CD8-positive, alpha-beta T cell (primary cell): ENCODE measurements at regions of chr10 and their contacts with region 1.

Region 1: DNA sequence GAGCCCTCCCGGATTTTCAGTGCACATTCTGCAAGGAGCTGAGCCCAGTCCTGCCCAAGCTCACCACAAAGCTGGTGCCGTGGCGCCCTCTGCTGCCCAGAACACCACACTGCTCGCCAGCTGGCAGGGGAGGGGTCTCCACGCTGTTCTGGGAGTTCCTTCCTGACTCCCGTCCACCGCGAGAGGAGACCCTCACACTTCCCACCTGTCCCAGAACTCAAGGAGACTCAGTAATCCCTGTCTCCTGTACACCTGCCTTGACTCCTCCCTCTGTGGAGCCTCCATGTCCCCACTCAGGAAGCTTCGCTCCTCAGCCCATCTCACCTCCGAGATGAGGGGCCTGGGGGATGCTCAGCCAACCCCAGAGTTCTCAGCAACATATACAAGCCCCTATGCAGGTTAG is 11.3 kb downstream of the C10orf105 start:
- DNase-seq: peak; percentile 38 to 83 (median 68)
- ATAC-seq: peak; percentile 66
- H3K4me3 ChIP-seq: no peak overlapping the region
- H3K4me3 Mint-ChIP-seq: no peak overlapping the region
- H3K27ac ChIP-seq: no peak overlapping the region
- H3K27ac Mint-ChIP-seq: no peak overlapping the region
- H3K4me1 ChIP-seq: peaks cover 31% of the 10 kb centered on the region
- H3K4me1 Mint-ChIP-seq: peaks cover 47% of the 10 kb centered on the region
- H3K27me3 ChIP-seq: no peaks in the 10 kb centered on the region
- H3K27me3 Mint-ChIP-seq: no peaks in the 10 kb centered on the region
- CTCF ChIP-seq: peak; percentile 79

Region 2: GRCh38 chr10:71319042-71319799 is 389.1 kb before region 1 on chr10 and contains the start of gene SLC29A3:
- CTCF ChIA-PET with region 1: interaction called, 30 read pairs
- POLR2A ChIA-PET with region 1: interaction called, 4 read pairs
- intact Hi-C with region 1: loop called (anchors 1 kb)
- DNase-seq: peak; percentile 69 to 92 (median 80)
- ATAC-seq: peak; percentile 87
- H3K4me3 ChIP-seq: peak within 1 kb of the TSS; percentile 83 to 91
- H3K4me3 Mint-ChIP-seq: peak within 1 kb of the TSS; percentile 92
- H3K27ac ChIP-seq: peak within 1 kb of the TSS; percentile 58 to 61
- H3K27ac Mint-ChIP-seq: peak within 1 kb of the TSS; percentile 80
- H3K4me1 ChIP-seq: peaks cover 18% of the 10 kb centered on the region
- H3K4me1 Mint-ChIP-seq: peaks cover 45% of the 10 kb centered on the region
- H3K27me3 ChIP-seq: no peaks in the 10 kb centered on the region
- H3K27me3 Mint-ChIP-seq: no peaks in the 10 kb centered on the region
- CTCF ChIP-seq: peak; percentile 38
- total RNA-seq, gene SLC29A3: 1.4 to 2.9 TPM

Region 3: GRCh38 chr10:71665456-71665855 is 42.8 kb before region 1 on chr10:
- CTCF ChIA-PET with region 1: interaction called, 10 read pairs
- POLR2A ChIA-PET with region 1: interaction called, 3 read pairs
- intact Hi-C with region 1: loop called (anchors 1 kb)
- DNase-seq: no peak
- ATAC-seq: no peak
- H3K4me3 ChIP-seq: no peak overlapping the region
- H3K4me3 Mint-ChIP-seq: no peak overlapping the region
- H3K27ac ChIP-seq: no peak overlapping the region
- H3K27ac Mint-ChIP-seq: no peak overlapping the region
- H3K4me1 ChIP-seq: peaks cover 18% of the 10 kb centered on the region
- H3K4me1 Mint-ChIP-seq: peaks cover 21% of the 10 kb centered on the region
- H3K27me3 ChIP-seq: no peaks in the 10 kb centered on the region
- H3K27me3 Mint-ChIP-seq: no peaks in the 10 kb centered on the region
- CTCF ChIP-seq: no peak

Region 4: GRCh38 chr10:71727738-71728737 is 19.7 kb after region 1 on chr10:
- CTCF ChIA-PET with region 1: interaction called, 51 read pairs
- POLR2A ChIA-PET with region 1: interaction called, 19 read pairs
- intact Hi-C with region 1: loop called in 1 of 2 experiments (anchors 1 kb)
- DNase-seq: peak; percentile 58 to 93 (median 78)
- ATAC-seq: peak; percentile 60
- H3K4me3 ChIP-seq: peak overlapping the region; percentile 16 to 18
- H3K4me3 Mint-ChIP-seq: peak overlapping the region; percentile 58
- H3K27ac ChIP-seq: peak overlapping the region; percentile 75 to 86
- H3K27ac Mint-ChIP-seq: peak overlapping the region; percentile 98
- H3K4me1 ChIP-seq: peaks cover 93% of the 10 kb centered on the region
- H3K4me1 Mint-ChIP-seq: peaks cover 86% of the 10 kb centered on the region
- H3K27me3 ChIP-seq: no peaks in the 10 kb centered on the region
- H3K27me3 Mint-ChIP-seq: no peaks in the 10 kb centered on the region
- CTCF ChIP-seq: no peak

Region 5: GRCh38 chr10:71766702-71767419 is 58.6 kb after region 1 on chr10:
- CTCF ChIA-PET with region 1: interaction called, 242 read pairs
- POLR2A ChIA-PET with region 1: interaction called, 15 read pairs
- intact Hi-C with region 1: loop called in 1 of 2 experiments (anchors 5 kb)
- DNase-seq: peak in 3 of 9 experiments; percentile 55 to 64 (median 57)
- ATAC-seq: no peak
- H3K4me3 ChIP-seq: peak overlapping the region in 1 of 2 experiments; percentile 13
- H3K4me3 Mint-ChIP-seq: peak overlapping the region; percentile 70
- H3K27ac ChIP-seq: peak overlapping the region; percentile 17 to 89
- H3K27ac Mint-ChIP-seq: peak overlapping the region; percentile 96
- H3K4me1 ChIP-seq: peaks cover 92% of the 10 kb centered on the region
- H3K4me1 Mint-ChIP-seq: peaks cover 93% of the 10 kb centered on the region
- H3K27me3 ChIP-seq: no peaks in the 10 kb centered on the region
- H3K27me3 Mint-ChIP-seq: no peaks in the 10 kb centered on the region
- CTCF ChIP-seq: no peak

Region 6: GRCh38 chr10:71812016-71812912 is 104.0 kb after region 1 on chr10:
- CTCF ChIA-PET with region 1: interaction called, 40 read pairs
- POLR2A ChIA-PET with region 1: no interaction called
- intact Hi-C with region 1: loop called (anchors 1 to 2 kb)
- DNase-seq: peak; percentile 63 to 91 (median 79)
- ATAC-seq: peak; percentile 91
- H3K4me3 ChIP-seq: no peak overlapping the region
- H3K4me3 Mint-ChIP-seq: no peak overlapping the region
- H3K27ac ChIP-seq: no peak overlapping the region
- H3K27ac Mint-ChIP-seq: no peak overlapping the region
- H3K4me1 ChIP-seq: peaks cover 4% of the 10 kb centered on the region
- H3K4me1 Mint-ChIP-seq: peaks cover 2% of the 10 kb centered on the region
- H3K27me3 ChIP-seq: no peaks in the 10 kb centered on the region
- H3K27me3 Mint-ChIP-seq: no peaks in the 10 kb centered on the region
- CTCF ChIP-seq: peak; percentile 79

Region 7: GRCh38 chr10:71963756-71964668 is 255.7 kb after region 1 on chr10 and contains the start of gene CHST3:
- CTCF ChIA-PET with region 1: no interaction called
- POLR2A ChIA-PET with region 1: no interaction called
- intact Hi-C with region 1: no loop called
- DNase-seq: peak in 1 of 9 experiments; percentile 10
- ATAC-seq: no peak
- H3K4me3 ChIP-seq: peak within 1 kb of the TSS in 1 of 2 experiments; percentile 48
- H3K4me3 Mint-ChIP-seq: peak within 1 kb of the TSS; percentile 74
- H3K27ac ChIP-seq: no peak within 1 kb of the TSS
- H3K27ac Mint-ChIP-seq: no peak within 1 kb of the TSS
- H3K4me1 ChIP-seq: peaks cover 9% of the 10 kb centered on the region
- H3K4me1 Mint-ChIP-seq: peaks cover 10% of the 10 kb centered on the region
- H3K27me3 ChIP-seq: peaks cover 8 to 14% of the 10 kb centered on the region in 2 experiments
- H3K27me3 Mint-ChIP-seq: peaks cover 45% of the 10 kb centered on the region
- CTCF ChIP-seq: no peak
- total RNA-seq, gene CHST3: not detected

Region 8: DNA sequence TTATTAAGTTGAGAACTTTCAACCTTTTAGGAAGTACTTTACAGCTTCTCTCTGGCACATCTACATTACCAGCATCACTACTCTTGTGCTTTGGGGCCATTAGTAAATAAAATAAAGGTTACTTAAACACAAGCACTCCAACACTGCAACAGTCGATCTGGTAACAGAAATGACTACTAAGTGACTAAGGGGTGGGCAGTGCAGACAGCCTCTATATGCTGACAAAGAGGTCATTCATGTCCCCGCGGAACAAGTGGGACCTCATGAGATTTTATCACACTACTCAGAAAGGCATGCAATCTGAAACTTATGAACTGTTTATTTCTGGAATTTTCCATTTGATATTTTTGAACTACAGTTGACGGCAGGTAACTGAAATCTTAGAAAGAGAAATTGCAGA is 757.7 kb after region 1 on chr10:
- CTCF ChIA-PET with region 1: no interaction called
- POLR2A ChIA-PET with region 1: no interaction called
- intact Hi-C with region 1: no loop called
- DNase-seq: no peak
- ATAC-seq: no peak
- H3K4me3 ChIP-seq: no peak overlapping the region
- H3K4me3 Mint-ChIP-seq: no peak overlapping the region
- H3K27ac ChIP-seq: no peak overlapping the region
- H3K27ac Mint-ChIP-seq: no peak overlapping the region
- H3K4me1 ChIP-seq: no peaks in the 10 kb centered on the region
- H3K4me1 Mint-ChIP-seq: no peaks in the 10 kb centered on the region
- H3K27me3 ChIP-seq: no peaks in the 10 kb centered on the region
- H3K27me3 Mint-ChIP-seq: no peaks in the 10 kb centered on the region
- CTCF ChIP-seq: no peak